Left ventricle myocardium inferior (tissue), 1 donor: ENCODE measurements at regions of chr9 and their contacts with region 1.

Region 1: GRCh38 chr9:5999443-6000101 is 15.9 kb downstream of the RANBP6 start:
- DNase-seq: no peak
- H3K4me3 ChIP-seq: no peak overlapping the region
- H3K27ac ChIP-seq: no peak overlapping the region
- H3K4me1 ChIP-seq: peaks cover 95% of the 10 kb centered on the region
- H3K27me3 ChIP-seq: no peaks in the 10 kb centered on the region
- CTCF ChIP-seq: no peak

Region 2: GRCh38 chr9:5939530-5939929 is 60.0 kb before region 1 on chr9:
- intact Hi-C with region 1: loop called (anchors 10 kb)
- DNase-seq: no peak
- H3K4me3 ChIP-seq: no peak overlapping the region
- H3K27ac ChIP-seq: no peak overlapping the region
- H3K4me1 ChIP-seq: peaks cover 7% of the 10 kb centered on the region
- H3K27me3 ChIP-seq: no peaks in the 10 kb centered on the region
- CTCF ChIP-seq: no peak

Region 3: DNA sequence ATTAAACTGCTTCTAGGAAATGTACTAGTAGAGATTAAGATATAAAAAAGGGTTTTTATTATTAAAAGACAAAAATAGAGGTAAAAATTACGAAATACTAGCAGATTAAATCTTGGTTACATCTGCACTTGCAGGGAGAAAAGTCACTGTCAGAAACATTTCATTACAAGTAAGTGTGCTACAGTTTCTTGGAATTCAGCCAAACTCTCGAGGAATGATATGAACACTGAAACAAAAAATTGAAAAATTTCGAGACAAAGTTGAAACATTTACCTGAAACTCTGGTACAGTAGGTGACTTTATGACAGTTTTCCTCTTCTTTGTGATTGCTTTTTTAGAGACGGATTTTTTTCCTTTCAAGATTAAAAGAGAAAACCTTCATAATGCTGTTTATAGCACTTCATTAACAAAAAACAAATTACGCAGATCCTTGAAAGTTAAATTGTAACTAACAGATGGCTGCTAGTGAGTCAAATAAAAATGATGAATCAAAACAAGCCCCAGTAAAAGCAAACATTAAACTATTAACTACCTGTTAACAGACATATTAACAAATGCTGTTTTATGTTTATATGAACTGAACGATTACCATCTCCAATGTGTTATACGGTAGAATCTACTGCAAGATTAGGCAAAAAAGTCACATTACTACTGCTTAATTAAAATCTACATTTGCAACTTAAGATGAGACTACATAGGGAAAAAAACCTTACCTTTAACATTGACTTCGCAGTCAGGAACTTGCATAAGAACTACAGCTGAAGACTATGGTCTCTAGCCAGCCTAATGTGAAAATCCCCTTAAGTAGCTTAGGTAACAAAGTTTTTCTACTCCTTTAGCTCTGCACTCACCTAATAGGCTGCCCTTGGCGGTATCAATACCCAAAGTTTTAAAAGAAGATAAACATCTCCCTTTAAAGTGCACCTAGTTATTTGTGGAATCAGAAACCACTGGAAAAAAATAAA is 45.5 kb before region 1 on chr9:
- intact Hi-C with region 1: no loop called
- DNase-seq: no peak
- H3K4me3 ChIP-seq: no peak overlapping the region
- H3K27ac ChIP-seq: no peak overlapping the region
- H3K4me1 ChIP-seq: peaks cover 13% of the 10 kb centered on the region
- H3K27me3 ChIP-seq: no peaks in the 10 kb centered on the region
- CTCF ChIP-seq: no peak